ENCODE measurements at regions of chr6 and their contacts with region 1.

Region 1: DNA sequence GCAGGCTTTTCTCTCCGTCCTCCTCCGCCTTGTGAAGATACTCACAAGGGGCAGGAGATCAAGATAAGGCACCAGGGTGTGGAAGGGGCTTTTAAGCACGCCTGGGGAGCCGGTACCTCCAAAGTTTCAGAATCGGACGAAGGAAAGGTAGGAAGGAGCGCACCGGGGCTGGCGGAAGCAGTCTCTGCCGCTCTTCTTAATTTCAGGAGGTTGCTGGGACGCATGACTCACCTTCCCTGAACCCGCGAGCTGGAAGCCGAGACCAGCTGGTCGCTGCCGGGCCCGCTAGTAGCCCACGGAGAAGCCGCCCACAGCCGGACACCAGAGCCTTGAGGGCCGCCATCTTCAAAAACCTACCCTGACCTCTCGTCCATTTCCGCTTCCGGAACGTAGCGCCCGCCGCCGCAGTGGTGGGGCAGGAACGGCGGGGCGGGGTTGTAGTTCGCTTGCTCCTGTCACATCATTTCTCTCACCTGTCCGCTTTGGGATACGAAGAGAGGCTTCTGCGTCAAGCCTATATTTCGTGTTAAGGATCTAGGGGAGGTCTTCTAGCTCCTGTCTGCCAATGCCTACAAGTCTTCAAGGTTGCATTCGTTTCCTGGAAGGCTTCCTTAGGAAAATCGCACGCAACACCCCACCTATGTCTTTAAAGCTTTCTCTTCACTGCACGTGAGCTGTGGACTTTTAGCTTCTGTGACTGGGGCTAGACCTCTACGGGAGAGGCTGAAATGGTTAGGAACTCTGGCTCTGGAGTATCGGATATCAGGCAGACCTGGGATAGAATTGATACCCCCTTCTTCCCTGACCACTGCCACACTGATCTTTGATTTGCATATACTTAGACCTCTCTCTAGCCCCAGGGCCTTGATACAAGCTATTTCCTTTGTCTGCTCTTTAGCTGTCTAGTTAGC is at the start of gene MRPS18A:
- DNase-seq: peak; percentile 75
- H3K4me3 Mint-ChIP-seq: peak within 1 kb of the TSS; percentile 95
- H3K27ac Mint-ChIP-seq: peak within 1 kb of the TSS; percentile 79
- H3K4me1 Mint-ChIP-seq: peaks cover 39% of the 10 kb centered on the region
- H3K27me3 Mint-ChIP-seq: no peaks in the 10 kb centered on the region
- total RNA-seq, gene MRPS18A: 44.8 and 45.1 TPM in 2 replicates

Region 2: GRCh38 chr6:41958022-41958856 is 1729.5 kb before region 1 on chr6:
- intact Hi-C with region 1: no loop called
- DNase-seq: no peak
- H3K4me3 Mint-ChIP-seq: peak overlapping the region; percentile 5
- H3K27ac Mint-ChIP-seq: peak overlapping the region; percentile 85
- H3K4me1 Mint-ChIP-seq: peaks cover 33% of the 10 kb centered on the region
- H3K27me3 Mint-ChIP-seq: no peaks in the 10 kb centered on the region

Region 3: GRCh38 chr6:43708860-43709653 is 21.4 kb after region 1 on chr6:
- intact Hi-C with region 1: loop called (anchors 2 kb)
- DNase-seq: no peak
- H3K4me3 Mint-ChIP-seq: no peak overlapping the region
- H3K27ac Mint-ChIP-seq: peak overlapping the region; percentile 18
- H3K4me1 Mint-ChIP-seq: peaks cover 29% of the 10 kb centered on the region
- H3K27me3 Mint-ChIP-seq: peaks cover 24% of the 10 kb centered on the region

Region 4: GRCh38 chr6:43733471-43734293 is 46.0 kb after region 1 on chr6:
- intact Hi-C with region 1: no loop called
- DNase-seq: no peak
- H3K4me3 Mint-ChIP-seq: no peak overlapping the region
- H3K27ac Mint-ChIP-seq: peak overlapping the region; percentile 10
- H3K4me1 Mint-ChIP-seq: peaks cover 10% of the 10 kb centered on the region
- H3K27me3 Mint-ChIP-seq: no peaks in the 10 kb centered on the region